ENCODE measurements at regions of chr4 and their contacts with region 1.

Region 1: GRCh38 chr4:22692736-22693135 is at the start of gene GBA3:
- DNase-seq: no peak
- H3K4me3 ChIP-seq: no peak within 1 kb of the TSS
- H3K4me3 Mint-ChIP-seq: no peak within 1 kb of the TSS
- H3K27ac ChIP-seq: no peak within 1 kb of the TSS
- H3K27ac Mint-ChIP-seq: no peak within 1 kb of the TSS
- H3K4me1 ChIP-seq: no peaks in the 10 kb centered on the region
- H3K4me1 Mint-ChIP-seq: peaks cover 9% of the 10 kb centered on the region
- H3K27me3 ChIP-seq: no peaks in the 10 kb centered on the region
- H3K27me3 Mint-ChIP-seq: peaks cover 0 to 2% (median 0%) of the 10 kb centered on the region in 3 donors
- CTCF ChIP-seq: no peak
- polyA plus RNA-seq, gene GBA3: not detected

Region 2: DNA sequence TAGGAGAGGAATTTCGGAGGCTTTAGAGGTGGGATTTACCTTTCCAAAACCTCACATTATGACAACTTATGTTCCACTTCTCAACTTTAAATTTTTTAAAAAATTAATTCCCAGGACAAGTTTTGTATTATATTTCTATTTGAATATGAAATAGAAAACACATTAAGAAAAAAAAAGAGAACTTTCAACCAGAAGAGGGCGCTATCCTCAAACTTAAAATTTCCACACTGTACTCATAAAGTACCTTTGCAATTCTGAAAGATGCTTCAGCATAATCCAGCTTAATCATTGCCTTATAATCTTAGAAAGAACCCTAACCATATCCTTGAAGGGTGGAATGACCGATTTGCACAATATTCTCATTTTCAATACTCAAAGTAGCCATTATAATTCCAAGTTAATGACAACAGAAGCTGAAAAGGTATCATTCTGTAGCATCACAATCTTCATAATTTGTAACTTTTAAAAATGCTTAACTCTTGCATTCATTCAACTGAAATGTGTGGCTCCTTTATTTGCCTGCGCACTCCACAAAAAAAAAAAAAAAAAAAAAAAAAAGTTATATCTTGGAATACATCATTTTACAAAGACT is 902.2 kb before region 1 on chr4:
- intact Hi-C with region 1: loop called in 1 of 2 experiments (anchors 5 kb)
- DNase-seq: no peak
- H3K4me3 ChIP-seq: no peak overlapping the region
- H3K4me3 Mint-ChIP-seq: no peak overlapping the region
- H3K27ac ChIP-seq: no peak overlapping the region
- H3K27ac Mint-ChIP-seq: no peak overlapping the region
- H3K4me1 ChIP-seq: no peaks in the 10 kb centered on the region
- H3K4me1 Mint-ChIP-seq: no peaks in the 10 kb centered on the region
- H3K27me3 ChIP-seq: no peaks in the 10 kb centered on the region
- H3K27me3 Mint-ChIP-seq: no peaks in the 10 kb centered on the region
- CTCF ChIP-seq: peak; percentile 55

Region 3: DNA sequence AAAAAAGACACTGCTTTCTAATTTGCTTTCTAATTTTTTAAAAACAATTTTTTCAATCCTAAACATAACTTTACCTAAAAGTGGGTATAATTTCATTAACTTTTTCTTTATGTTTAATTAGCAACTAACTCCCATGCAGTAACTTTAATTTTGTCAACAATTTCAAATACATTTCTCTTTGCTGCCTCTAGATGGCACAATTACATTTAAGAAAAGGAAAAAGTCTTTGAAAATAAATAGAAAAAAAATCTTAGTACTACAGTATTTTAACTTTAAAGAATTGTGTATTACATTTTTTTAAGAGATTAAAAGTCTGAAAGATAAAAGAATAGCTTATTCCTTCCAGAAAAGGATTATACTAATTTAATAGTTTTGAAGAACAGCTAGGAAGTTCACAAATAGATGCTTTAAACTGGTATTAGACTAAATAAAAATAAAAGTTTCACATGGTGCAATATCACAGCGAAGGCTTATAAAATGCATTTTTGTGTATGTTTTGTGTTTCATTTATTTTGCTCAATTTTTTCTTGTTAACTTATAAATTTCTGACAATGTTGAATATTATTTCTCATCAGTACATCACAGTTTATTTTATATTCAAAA is 282.0 kb before region 1 on chr4:
- intact Hi-C with region 1: loop called in 1 of 2 experiments (anchors 5 kb)
- DNase-seq: no peak
- H3K4me3 ChIP-seq: no peak overlapping the region
- H3K4me3 Mint-ChIP-seq: no peak overlapping the region
- H3K27ac ChIP-seq: no peak overlapping the region
- H3K27ac Mint-ChIP-seq: no peak overlapping the region
- H3K4me1 ChIP-seq: no peaks in the 10 kb centered on the region
- H3K4me1 Mint-ChIP-seq: no peaks in the 10 kb centered on the region
- H3K27me3 ChIP-seq: no peaks in the 10 kb centered on the region
- H3K27me3 Mint-ChIP-seq: no peaks in the 10 kb centered on the region
- CTCF ChIP-seq: peak; percentile 78